MCF 10A (cell line): ENCODE measurements at regions of chr20 and their contacts with region 1.

Region 1: DNA sequence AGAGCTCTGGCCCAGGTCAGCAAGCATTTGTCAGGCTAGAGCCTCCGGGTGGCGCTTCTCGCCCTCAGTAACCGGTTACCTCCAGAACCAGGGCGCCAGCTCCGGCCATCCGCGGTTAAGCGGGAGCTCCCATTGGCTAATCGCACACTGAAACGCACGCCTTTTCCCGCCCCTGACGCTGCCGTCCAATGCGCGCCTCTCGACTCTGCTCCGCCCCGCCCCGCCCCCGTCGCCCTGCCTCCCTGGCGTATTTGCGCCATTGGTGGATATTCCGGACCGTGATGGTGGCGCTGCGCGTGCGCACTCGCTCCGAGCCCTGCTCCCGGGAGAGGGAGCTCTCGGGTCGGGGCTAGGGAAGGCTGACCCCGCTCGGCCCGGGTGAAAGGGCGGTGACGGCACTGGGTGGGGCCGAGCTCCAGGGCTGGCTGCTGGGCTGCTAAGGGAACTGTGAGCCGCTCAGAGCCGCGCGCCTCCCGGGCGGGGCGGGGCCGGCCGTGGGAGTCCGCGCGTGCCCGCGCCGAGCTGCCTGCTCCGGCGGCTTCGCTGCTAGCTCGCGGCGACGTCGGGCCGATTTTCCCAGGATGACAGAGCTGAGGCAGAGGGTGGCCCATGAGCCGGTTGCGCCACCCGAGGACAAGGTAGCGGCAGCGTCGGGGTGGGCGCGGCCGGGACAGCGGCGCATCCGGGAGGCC is at the start of gene CDS2:
- DNase-seq: peak; percentile 98
- H3K4me3 Mint-ChIP-seq: peak within 1 kb of the TSS; percentile 76
- H3K27ac Mint-ChIP-seq: peak within 1 kb of the TSS; percentile 36
- H3K4me1 Mint-ChIP-seq: peaks cover 30% of the 10 kb centered on the region
- H3K27me3 Mint-ChIP-seq: no peaks in the 10 kb centered on the region
- CTCF ChIP-seq: peak; percentile 65
- total RNA-seq, gene CDS2: 26.3 and 26.8 TPM in 2 replicates

Region 2: GRCh38 chr20:5072756-5073659 is 53.6 kb before region 1 on chr20:
- CTCF ChIA-PET with region 1: interaction called, 3 read pairs
- POLR2A ChIA-PET with region 1: interaction called, 10 read pairs
- intact Hi-C with region 1: no loop called
- DNase-seq: peak; percentile 99
- H3K4me3 Mint-ChIP-seq: peak overlapping the region; percentile 47
- H3K27ac Mint-ChIP-seq: peak overlapping the region; percentile 90
- H3K4me1 Mint-ChIP-seq: peaks cover 27% of the 10 kb centered on the region
- H3K27me3 Mint-ChIP-seq: no peaks in the 10 kb centered on the region
- CTCF ChIP-seq: no peak

Region 3: GRCh38 chr20:5156675-5157448 is 30.2 kb after region 1 on chr20:
- CTCF ChIA-PET with region 1: interaction called, 39 read pairs
- POLR2A ChIA-PET with region 1: interaction called, 7 read pairs
- intact Hi-C with region 1: no loop called
- DNase-seq: peak; percentile 22
- H3K4me3 Mint-ChIP-seq: no peak overlapping the region
- H3K27ac Mint-ChIP-seq: peak overlapping the region; percentile 57
- H3K4me1 Mint-ChIP-seq: peaks cover 29% of the 10 kb centered on the region
- H3K27me3 Mint-ChIP-seq: no peaks in the 10 kb centered on the region
- CTCF ChIP-seq: no peak

Region 4: GRCh38 chr20:5181956-5182355 is 55.3 kb after region 1 on chr20:
- CTCF ChIA-PET with region 1: interaction called, 43 read pairs
- POLR2A ChIA-PET with region 1: interaction called, 4 read pairs
- intact Hi-C with region 1: no loop called
- DNase-seq: no peak
- H3K4me3 Mint-ChIP-seq: no peak overlapping the region
- H3K27ac Mint-ChIP-seq: no peak overlapping the region
- H3K4me1 Mint-ChIP-seq: no peaks in the 10 kb centered on the region
- H3K27me3 Mint-ChIP-seq: no peaks in the 10 kb centered on the region
- CTCF ChIP-seq: no peak

Region 5: DNA sequence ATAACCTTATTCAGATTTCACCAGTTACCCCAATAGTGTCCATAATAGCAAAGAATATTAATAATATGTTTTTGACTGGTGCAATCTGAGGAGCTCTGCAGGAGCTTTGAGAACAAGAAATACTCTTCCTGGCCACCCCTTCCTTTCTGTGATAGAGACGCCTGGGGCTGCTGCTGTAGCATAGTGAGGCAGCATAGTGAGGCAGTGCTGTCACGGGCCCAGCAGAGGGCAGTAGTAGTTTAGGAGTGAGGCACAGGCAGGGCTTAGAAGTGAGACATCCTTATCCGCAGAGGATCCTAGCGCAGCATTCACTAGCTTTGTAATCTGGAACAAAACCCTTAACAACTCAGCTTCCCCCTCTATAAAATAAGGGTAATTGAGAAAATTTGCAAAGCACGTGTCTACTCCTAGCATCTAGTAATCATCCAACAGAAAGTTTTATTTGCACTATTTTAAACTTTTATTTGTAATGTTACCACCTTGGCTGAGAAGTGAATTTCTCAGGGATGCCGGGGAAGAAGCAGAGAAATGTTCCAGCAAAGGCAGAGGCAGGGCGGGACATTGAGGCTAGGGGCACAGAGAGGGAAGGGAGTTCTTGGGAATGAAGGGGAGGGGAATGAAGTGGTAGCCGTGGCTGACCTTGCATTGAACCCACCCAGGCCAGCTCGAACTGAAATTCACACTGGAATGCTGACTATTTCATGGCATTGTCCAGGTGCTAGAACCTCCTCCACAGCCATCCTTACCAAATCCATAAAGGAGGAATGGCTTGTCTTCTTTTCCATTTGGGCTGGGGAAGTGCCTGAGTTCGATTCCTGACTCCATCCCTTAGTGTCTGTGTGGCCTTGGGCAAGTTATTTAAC is 78.9 kb after region 1 on chr20:
- CTCF ChIA-PET with region 1: interaction called, 25 read pairs
- POLR2A ChIA-PET with region 1: no interaction called
- intact Hi-C with region 1: no loop called
- DNase-seq: peak; percentile 70
- H3K4me3 Mint-ChIP-seq: no peak overlapping the region
- H3K27ac Mint-ChIP-seq: no peak overlapping the region
- H3K4me1 Mint-ChIP-seq: no peaks in the 10 kb centered on the region
- H3K27me3 Mint-ChIP-seq: no peaks in the 10 kb centered on the region
- CTCF ChIP-seq: peak; percentile 88

Region 6: GRCh38 chr20:5448449-5449118 is 321.9 kb after region 1 on chr20:
- CTCF ChIA-PET with region 1: interaction called, 15 read pairs
- POLR2A ChIA-PET with region 1: interaction called, 8 read pairs
- intact Hi-C with region 1: loop called (anchors 1 kb)
- DNase-seq: peak; percentile 64
- H3K4me3 Mint-ChIP-seq: no peak overlapping the region
- H3K27ac Mint-ChIP-seq: no peak overlapping the region
- H3K4me1 Mint-ChIP-seq: no peaks in the 10 kb centered on the region
- H3K27me3 Mint-ChIP-seq: peaks cover 62% of the 10 kb centered on the region
- CTCF ChIP-seq: peak; percentile 68